Dorsolateral prefrontal cortex (tissue), 120 donors: ENCODE measurements at regions of chr15 and their contacts with region 1.

Region 1: GRCh38 chr15:88664151-88664778 is 25.4 kb downstream of the ISG20 start:
- DNase-seq: peak in 4 of 10 donors; percentile 35 to 74 (median 56)
- H3K4me3 ChIP-seq: no peak overlapping the region
- H3K27ac ChIP-seq: peak overlapping the region in 1 of 59 donors; percentile 8
- H3K27me3 ChIP-seq: no peaks in the 10 kb centered on the region
- CTCF ChIP-seq: peak in 54 of 56 donors; percentile 23 to 77 (median 54)

Region 2: GRCh38 chr15:88476635-88477060 is 187.6 kb before region 1 on chr15:
- intact Hi-C with region 1: loop called in 1 of 2 experiments (anchors 5 kb)
- DNase-seq: peak in 4 of 10 donors; percentile 43 to 72 (median 50)
- H3K4me3 ChIP-seq: peak overlapping the region in 9 of 59 donors; percentile 1 to 23 (median 9)
- H3K27ac ChIP-seq: peak overlapping the region in 55 of 59 donors; percentile 35 to 87 (median 72)
- H3K27me3 ChIP-seq: no peaks in the 10 kb centered on the region
- CTCF ChIP-seq: peak; percentile 55 to 87 (median 74)

Region 3: GRCh38 chr15:88546248-88547129 is 117.8 kb before region 1 on chr15 and contains the start of gene DET1:
- intact Hi-C with region 1: no loop called
- DNase-seq: peak; percentile 93 to 97 (median 96)
- H3K4me3 ChIP-seq: peak within 1 kb of the TSS; percentile 43 to 97 (median 82)
- H3K27ac ChIP-seq: peak within 1 kb of the TSS; percentile 63 to 98 (median 91)
- H3K27me3 ChIP-seq: no peaks in the 10 kb centered on the region
- CTCF ChIP-seq: peak; percentile 74 to 95 (median 89)
- total RNA-seq, gene DET1: 1.8 to 11.2 (median 7.1) TPM

Region 4: GRCh38 chr15:88613074-88613944 is 51.0 kb before region 1 on chr15:
- intact Hi-C with region 1: no loop called
- DNase-seq: no peak
- H3K4me3 ChIP-seq: no peak overlapping the region
- H3K27ac ChIP-seq: no peak overlapping the region
- H3K27me3 ChIP-seq: no peaks in the 10 kb centered on the region
- CTCF ChIP-seq: no peak